HCT116 (cell line): ENCODE measurements at regions of chr2 and their contacts with region 1.

Region 1: GRCh38 chr2:188291617-188292347 is at the start of gene GULP1:
- DNase-seq: no peak
- ATAC-seq: peak; percentile 52
- H3K4me3 ChIP-seq: peak within 1 kb of the TSS; percentile 80 to 90
- H3K27ac ChIP-seq: peak within 1 kb of the TSS; percentile 98
- H3K4me1 ChIP-seq: peaks cover 24 to 46% of the 10 kb centered on the region in 2 experiments
- H3K27me3 ChIP-seq: no peaks in the 10 kb centered on the region
- CTCF ChIP-seq: peak; percentile 31 to 72 (median 60); a peak in 5 of 6 replicates
- POLR2A ChIP-seq: no peak
- RAD21 ChIP-seq: peak; percentile 51
- total RNA-seq, gene GULP1: 76.0 TPM

Region 2: DNA sequence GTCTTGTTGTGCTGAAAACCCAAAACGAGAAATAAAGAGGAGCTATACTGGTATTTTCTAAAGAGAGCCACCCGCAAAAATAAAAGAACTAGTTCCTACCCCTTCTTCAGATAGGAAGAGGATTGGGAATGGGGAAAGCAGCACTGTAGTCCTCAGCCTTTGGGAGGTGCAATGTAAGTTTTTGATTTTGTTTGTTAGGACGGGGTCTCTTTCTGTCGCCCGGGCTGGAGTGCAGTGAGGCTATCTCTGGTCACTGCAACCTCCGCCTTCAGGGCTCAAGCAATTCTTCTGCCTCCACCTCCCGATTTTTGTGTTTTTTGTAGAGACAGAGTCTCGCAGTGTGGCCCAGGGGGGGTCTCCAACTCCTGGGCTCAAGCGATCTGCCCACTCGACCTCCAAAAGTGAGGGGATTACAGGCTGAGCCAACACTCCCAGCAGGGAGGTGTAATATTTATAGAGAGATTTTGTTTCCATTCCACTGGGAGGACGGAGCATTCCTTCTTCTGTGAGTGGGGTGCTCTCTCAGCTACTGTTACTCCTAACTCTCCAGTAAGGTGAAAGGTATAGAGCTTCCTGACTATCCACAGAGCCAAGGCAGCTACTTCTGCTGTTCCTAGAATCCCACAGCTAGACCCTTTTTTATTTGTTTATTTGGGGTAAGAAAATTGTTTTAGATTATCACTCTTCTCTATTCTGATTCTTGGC is 13.2 kb before region 1 on chr2:
- CTCF ChIA-PET with region 1: interaction called, 3 read pairs
- POLR2A ChIA-PET with region 1: interaction called, 10 read pairs
- RAD21 ChIA-PET with region 1: no interaction called
- intact Hi-C with region 1: no loop called
- DNase-seq: no peak
- ATAC-seq: no peak
- H3K4me3 ChIP-seq: no peak overlapping the region
- H3K27ac ChIP-seq: no peak overlapping the region
- H3K4me1 ChIP-seq: no peaks in the 10 kb centered on the region
- H3K27me3 ChIP-seq: no peaks in the 10 kb centered on the region
- CTCF ChIP-seq: no peak
- POLR2A ChIP-seq: no peak
- RAD21 ChIP-seq: no peak

Region 3: DNA sequence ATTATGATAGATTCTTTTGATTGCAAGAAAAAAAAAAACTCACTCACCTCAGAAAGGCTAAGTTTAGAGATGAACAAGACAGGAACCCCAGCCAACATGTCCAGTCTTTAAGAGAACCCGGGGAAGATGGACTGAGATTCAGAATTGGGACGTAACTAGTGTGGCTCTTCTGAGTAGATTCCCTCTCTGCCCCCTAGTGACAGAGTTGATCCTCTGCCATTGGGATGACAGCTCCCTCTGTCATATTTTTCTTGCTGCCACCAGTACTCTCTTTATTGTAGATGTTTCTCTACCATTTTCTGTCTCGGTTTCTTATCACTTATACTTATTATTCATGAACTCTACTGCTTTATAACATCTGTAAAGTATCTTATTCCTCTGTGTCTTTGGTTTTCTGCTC is 77.6 kb after region 1 on chr2:
- CTCF ChIA-PET with region 1: interaction called, 4 read pairs
- POLR2A ChIA-PET with region 1: interaction called, 3 read pairs
- RAD21 ChIA-PET with region 1: no interaction called
- intact Hi-C with region 1: loop called (anchors 5 kb)
- DNase-seq: peak; percentile 35
- ATAC-seq: peak; percentile 94
- H3K4me3 ChIP-seq: no peak overlapping the region
- H3K27ac ChIP-seq: no peak overlapping the region
- H3K4me1 ChIP-seq: peaks cover 0 to 14% of the 10 kb centered on the region in 2 experiments; a peak in 3 of 4 replicates
- H3K27me3 ChIP-seq: no peaks in the 10 kb centered on the region
- CTCF ChIP-seq: peak; percentile 56 to 72 (median 66); a peak in 5 of 6 replicates
- POLR2A ChIP-seq: no peak
- RAD21 ChIP-seq: peak; percentile 69

Region 4: GRCh38 chr2:188495990-188496431 is 204.2 kb after region 1 on chr2:
- CTCF ChIA-PET with region 1: no interaction called
- POLR2A ChIA-PET with region 1: interaction called, 4 read pairs
- RAD21 ChIA-PET with region 1: no interaction called
- intact Hi-C with region 1: loop called (anchors 5 kb)
- DNase-seq: peak; percentile 86
- ATAC-seq: peak; percentile 74
- H3K4me3 ChIP-seq: peak overlapping the region in 1 of 2 experiments; percentile 22; a peak in 1 of 4 replicates
- H3K27ac ChIP-seq: peak overlapping the region; percentile 91
- H3K4me1 ChIP-seq: peaks cover 56 to 58% of the 10 kb centered on the region in 2 experiments
- H3K27me3 ChIP-seq: no peaks in the 10 kb centered on the region
- CTCF ChIP-seq: no peak
- POLR2A ChIP-seq: no peak
- RAD21 ChIP-seq: 0 out of 2 replicates have a peak, but pooled peaks have one; percentile 12